ENCODE measurements at regions of chr7 and their contacts with region 1.

Region 1: GRCh38 chr7:44962483-44963251 is 16.1 kb downstream of the MYO1G start:
- DNase-seq: no peak
- H3K4me3 ChIP-seq: peak overlapping the region; percentile 18 to 64 (median 44)
- H3K27ac ChIP-seq: no peak overlapping the region
- H3K4me1 ChIP-seq: peaks cover 11 to 19% (median 11%) of the 10 kb centered on the region in 3 donors
- H3K27me3 ChIP-seq: peaks cover 0 to 43% (median 0%) of the 10 kb centered on the region in 4 donors
- CTCF ChIP-seq: no peak
- POLR2A ChIP-seq: no peak

Region 2: GRCh38 chr7:45136106-45137060 is 173.7 kb after region 1 on chr7:
- intact Hi-C with region 1: loop called (anchors 10 kb)
- DNase-seq: no peak
- H3K4me3 ChIP-seq: no peak overlapping the region
- H3K27ac ChIP-seq: no peak overlapping the region
- H3K4me1 ChIP-seq: no peaks in the 10 kb centered on the region
- H3K27me3 ChIP-seq: peaks cover 0 to 8% (median 0%) of the 10 kb centered on the region in 4 donors
- CTCF ChIP-seq: peak; percentile 80 to 91 (median 84)
- POLR2A ChIP-seq: no peak

Region 3: GRCh38 chr7:45292481-45292880 is 329.8 kb after region 1 on chr7:
- intact Hi-C with region 1: no loop called
- DNase-seq: no peak
- H3K4me3 ChIP-seq: no peak overlapping the region
- H3K27ac ChIP-seq: no peak overlapping the region
- H3K4me1 ChIP-seq: no peaks in the 10 kb centered on the region
- H3K27me3 ChIP-seq: peaks cover 0 to 3% (median 0%) of the 10 kb centered on the region in 4 donors
- CTCF ChIP-seq: no peak
- POLR2A ChIP-seq: no peak

Measured in esophagus squamous epithelium (tissue), 5 donors.